ENCODE measurements at regions of chr7 and their contacts with region 1.

Region 1: DNA sequence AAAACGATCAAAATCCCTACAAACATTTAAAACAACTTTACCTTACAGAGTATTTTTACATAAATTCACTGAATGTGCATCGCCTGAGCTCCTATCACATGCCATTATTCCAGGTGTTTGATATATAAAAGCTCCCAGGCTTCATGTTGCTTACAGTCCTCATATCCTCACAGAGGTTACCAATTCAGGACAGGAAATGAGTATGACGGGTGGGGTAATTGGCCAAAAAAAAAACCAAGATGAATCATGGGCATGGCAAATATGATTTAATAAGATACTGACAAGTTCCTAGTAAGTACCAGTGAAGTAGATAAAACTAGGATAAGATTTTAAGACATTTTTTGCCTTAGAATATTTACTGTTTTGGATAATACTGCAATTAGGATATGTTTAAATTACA is 135.8 kb downstream of the KMT2E start:
- DNase-seq: no peak
- H3K4me3 Mint-ChIP-seq: no peak overlapping the region
- H3K27ac Mint-ChIP-seq: no peak overlapping the region
- H3K4me1 Mint-ChIP-seq: peaks cover 18% of the 10 kb centered on the region
- H3K27me3 Mint-ChIP-seq: no peaks in the 10 kb centered on the region

Region 2: GRCh38 chr7:105336009-105336408 is 186.2 kb after region 1 on chr7:
- intact Hi-C with region 1: loop called (anchors 1 kb)
- DNase-seq: no peak
- H3K4me3 Mint-ChIP-seq: no peak overlapping the region
- H3K27ac Mint-ChIP-seq: no peak overlapping the region
- H3K4me1 Mint-ChIP-seq: peaks cover 11% of the 10 kb centered on the region
- H3K27me3 Mint-ChIP-seq: no peaks in the 10 kb centered on the region